Activated B cell treated with CpG ODN at 0.5 μM for 24 hours (primary cell): ENCODE measurements at regions of chr5 and their contacts with region 1.

Region 1: DNA sequence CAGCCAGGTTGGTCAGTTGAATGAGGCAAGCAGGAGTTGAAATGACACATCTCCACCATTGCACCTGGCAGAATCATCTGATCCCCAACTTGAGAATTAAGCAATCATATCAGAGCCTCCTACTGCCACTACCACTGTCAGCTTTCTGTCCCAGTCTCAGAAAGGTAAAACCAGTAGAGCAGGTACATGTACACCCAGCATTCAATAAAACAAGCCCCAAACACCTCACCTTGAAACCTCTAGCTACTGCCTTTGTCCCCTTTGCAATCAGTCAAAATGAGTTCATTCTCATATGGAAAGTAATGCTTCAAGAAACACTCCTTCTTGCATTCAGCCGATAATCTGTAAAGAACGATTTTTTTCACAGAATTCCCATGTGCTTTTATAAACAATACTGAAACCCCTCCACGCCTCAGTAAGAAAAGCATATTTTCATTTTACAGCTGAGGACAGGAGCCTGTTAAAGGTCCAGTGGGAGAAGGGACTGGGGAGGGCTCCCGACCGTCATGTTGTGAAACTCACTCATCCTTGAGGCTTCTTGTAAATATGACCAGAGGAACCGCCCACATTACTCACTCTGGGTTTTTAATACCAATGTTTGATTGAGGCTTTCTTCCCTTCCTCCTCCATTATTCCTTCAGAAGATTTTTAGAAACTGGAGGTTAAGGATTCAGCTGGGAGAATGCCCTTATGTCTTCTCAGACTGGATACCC is 61.2 kb upstream of the GLRX start:
- DNase-seq: no peak
- ATAC-seq: peak; percentile 74
- H3K4me3 Mint-ChIP-seq: peak overlapping the region; percentile 61
- H3K27ac Mint-ChIP-seq: peak overlapping the region; percentile 63
- H3K4me1 Mint-ChIP-seq: peaks cover 18% of the 10 kb centered on the region
- H3K27me3 Mint-ChIP-seq: no peaks in the 10 kb centered on the region
- CTCF ChIP-seq: no peak

Region 2: DNA sequence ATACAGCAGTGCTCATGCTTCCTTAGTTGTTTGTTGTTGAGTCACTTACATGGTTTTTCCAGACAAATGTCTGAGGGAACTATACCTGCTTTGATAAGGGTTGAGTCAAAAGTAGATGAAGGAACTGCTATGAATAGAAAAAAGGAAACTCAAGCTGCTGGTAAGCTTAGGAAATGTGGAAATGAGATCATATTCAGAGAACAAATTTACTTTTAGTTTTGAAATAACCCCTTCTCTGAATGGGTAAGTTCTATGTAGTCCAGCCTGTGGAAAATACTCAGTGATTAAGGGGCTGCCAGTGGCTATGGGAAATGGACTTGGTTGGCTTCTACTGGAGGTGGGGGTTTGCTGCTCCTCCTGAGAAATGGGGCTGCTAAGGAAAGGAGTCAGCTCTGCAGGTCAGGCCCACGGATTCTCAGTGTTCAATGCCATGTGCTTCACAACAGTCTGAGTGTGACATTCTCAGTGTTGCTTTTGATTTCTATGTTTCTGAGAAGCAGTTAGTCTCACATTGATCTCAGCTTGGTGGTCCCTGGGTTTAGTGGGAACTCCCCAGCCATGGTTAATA is 13.6 kb before region 1 on chr5:
- CTCF ChIA-PET with region 1: no interaction called
- POLR2A ChIA-PET with region 1: no interaction called
- intact Hi-C with region 1: loop called (anchors 2 kb)
- DNase-seq: no peak
- ATAC-seq: peak; percentile 33
- H3K4me3 Mint-ChIP-seq: peak overlapping the region; percentile 42
- H3K27ac Mint-ChIP-seq: peak overlapping the region; percentile 76
- H3K4me1 Mint-ChIP-seq: peaks cover 35% of the 10 kb centered on the region
- H3K27me3 Mint-ChIP-seq: no peaks in the 10 kb centered on the region
- CTCF ChIP-seq: no peak